ENCODE measurements at regions of chr16 and their contacts with region 1.

Region 1: GRCh38 chr16:49755313-49755620 is 100.6 kb downstream of the ZNF423 start:
- DNase-seq: peak in 1 of 5 donors; percentile 48
- H3K4me3 ChIP-seq: peak overlapping the region; percentile 41
- H3K27ac ChIP-seq: no peak overlapping the region
- H3K4me1 ChIP-seq: no peaks in the 10 kb centered on the region
- H3K27me3 ChIP-seq: no peaks in the 10 kb centered on the region
- CTCF ChIP-seq: peak; percentile 37 to 45 (median 41)
- EP300 ChIP-seq: no peak
- POLR2A ChIP-seq: no peak

Region 2: DNA sequence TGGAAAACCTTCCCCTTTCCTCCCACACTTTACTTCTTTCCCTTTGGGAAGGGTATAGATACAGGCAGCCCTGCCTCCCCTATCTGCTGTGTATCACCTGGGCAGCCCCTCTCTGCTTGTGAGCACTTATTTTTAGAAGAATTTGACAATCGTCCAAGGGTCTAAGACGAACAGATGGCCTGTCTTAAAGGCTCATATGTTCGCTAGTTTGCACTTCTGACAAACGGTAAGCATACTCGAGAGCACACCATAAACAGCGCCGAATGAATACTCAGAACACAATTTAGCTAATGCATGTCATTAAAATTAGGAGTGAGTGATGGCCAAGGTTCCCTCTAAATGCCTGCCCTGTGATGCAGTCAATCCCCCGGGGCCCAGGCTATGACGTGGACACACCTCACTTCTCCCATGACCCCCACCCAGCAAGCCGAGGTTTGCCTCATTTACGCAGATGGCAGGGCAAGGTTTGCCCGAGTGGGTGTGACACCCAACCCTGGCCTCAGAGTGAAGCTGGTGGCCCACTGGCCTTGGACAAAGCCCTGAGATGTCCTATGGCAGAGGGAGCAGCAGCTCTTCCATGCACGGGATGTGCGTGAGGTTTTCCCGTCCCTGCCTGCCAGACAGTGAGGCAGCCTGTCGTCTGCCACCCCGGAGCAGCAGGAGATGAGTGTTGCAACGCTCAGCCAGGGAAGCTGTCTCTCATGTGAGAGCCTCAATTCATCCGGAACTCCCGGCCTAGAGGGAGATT is 256.4 kb before region 1 on chr16:
- intact Hi-C with region 1: loop called in 3 of 4 experiments (anchors 5 to 10 kb)
- DNase-seq: no peak
- H3K4me3 ChIP-seq: no peak overlapping the region
- H3K27ac ChIP-seq: no peak overlapping the region
- H3K4me1 ChIP-seq: no peaks in the 10 kb centered on the region
- H3K27me3 ChIP-seq: no peaks in the 10 kb centered on the region
- CTCF ChIP-seq: no peak
- EP300 ChIP-seq: no peak
- POLR2A ChIP-seq: no peak

Region 3: GRCh38 chr16:49608779-49609178 is 146.5 kb before region 1 on chr16:
- intact Hi-C with region 1: loop called in 1 of 4 experiments (anchors 10 kb)
- DNase-seq: peak in 2 of 5 donors; percentile 22 to 40
- H3K4me3 ChIP-seq: no peak overlapping the region
- H3K27ac ChIP-seq: no peak overlapping the region
- H3K4me1 ChIP-seq: no peaks in the 10 kb centered on the region
- H3K27me3 ChIP-seq: no peaks in the 10 kb centered on the region
- CTCF ChIP-seq: peak in 1 of 3 donors; percentile 27
- EP300 ChIP-seq: no peak
- POLR2A ChIP-seq: no peak

Region 4: GRCh38 chr16:49701789-49702494 is 53.3 kb before region 1 on chr16:
- intact Hi-C with region 1: loop called in 1 of 4 experiments (anchors 5 kb)
- DNase-seq: peak; percentile 81 to 84 (median 83)
- H3K4me3 ChIP-seq: no peak overlapping the region
- H3K27ac ChIP-seq: peak overlapping the region in 1 of 2 donors; percentile 90
- H3K4me1 ChIP-seq: peaks cover 26% of the 10 kb centered on the region
- H3K27me3 ChIP-seq: no peaks in the 10 kb centered on the region
- CTCF ChIP-seq: no peak
- EP300 ChIP-seq: no peak
- POLR2A ChIP-seq: no peak

Region 5: DNA sequence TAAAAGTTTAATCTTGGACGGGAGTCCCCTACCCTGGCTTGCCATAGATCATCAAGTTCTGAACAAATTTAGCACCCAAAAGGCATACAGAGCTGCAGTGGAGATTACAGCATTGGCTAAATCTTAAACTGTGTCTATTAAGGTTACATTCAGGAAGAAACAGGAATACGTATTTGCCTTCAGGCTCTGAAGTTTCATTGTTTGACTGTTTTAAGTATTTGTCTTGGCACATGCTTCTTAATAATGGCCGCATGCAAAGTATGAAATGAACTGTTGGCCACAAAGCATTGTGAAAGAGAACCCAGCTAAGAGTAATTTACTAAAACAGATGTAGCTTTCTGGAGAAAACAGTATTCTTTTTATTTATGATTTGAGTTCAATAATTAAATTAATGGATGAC is 205.8 kb after region 1 on chr16:
- intact Hi-C with region 1: no loop called
- DNase-seq: no peak
- H3K4me3 ChIP-seq: no peak overlapping the region
- H3K27ac ChIP-seq: no peak overlapping the region
- H3K4me1 ChIP-seq: no peaks in the 10 kb centered on the region
- H3K27me3 ChIP-seq: no peaks in the 10 kb centered on the region
- CTCF ChIP-seq: no peak
- EP300 ChIP-seq: no peak
- POLR2A ChIP-seq: no peak

Measured in ovary (tissue), 10 donors.